MCF 10A (cell line): ENCODE measurements at regions of chr3 and their contacts with region 1.

Region 1: GRCh38 chr3:51445544-51446280 is 54.1 kb downstream of the DCAF1 start:
- DNase-seq: no peak
- H3K4me3 Mint-ChIP-seq: no peak overlapping the region
- H3K27ac Mint-ChIP-seq: no peak overlapping the region
- H3K4me1 Mint-ChIP-seq: peaks cover 6% of the 10 kb centered on the region
- H3K27me3 Mint-ChIP-seq: no peaks in the 10 kb centered on the region
- CTCF ChIP-seq: no peak

Region 2: DNA sequence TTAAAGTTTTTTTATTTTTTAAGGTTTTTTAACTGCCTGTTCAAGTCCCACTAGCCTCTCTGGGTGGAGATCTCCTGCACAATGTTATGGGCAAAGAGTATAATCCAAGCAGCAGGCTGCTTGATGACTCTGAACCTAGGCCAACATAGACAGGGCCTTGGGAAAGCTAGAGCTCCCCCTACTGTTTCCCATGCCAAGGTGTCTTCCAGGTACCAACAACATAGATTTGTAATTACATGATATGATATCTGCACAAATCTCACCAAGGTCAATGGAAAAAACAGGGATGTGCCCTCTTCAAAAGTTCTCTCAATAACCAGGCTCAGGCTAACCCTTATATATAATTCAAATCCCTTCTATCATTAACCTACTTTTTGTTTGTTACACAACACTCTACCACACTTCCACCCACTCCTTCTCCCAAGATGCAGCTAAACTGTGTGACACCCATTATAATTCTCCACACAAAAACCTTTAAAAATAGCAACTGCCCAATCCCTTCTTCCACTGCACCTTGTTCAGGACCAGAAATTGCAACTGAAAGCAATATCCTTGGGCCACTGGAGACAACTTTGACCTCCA is 10.9 kb before region 1 on chr3:
- CTCF ChIA-PET with region 1: interaction called, 15 read pairs
- POLR2A ChIA-PET with region 1: no interaction called
- intact Hi-C with region 1: no loop called
- DNase-seq: peak; percentile 70
- H3K4me3 Mint-ChIP-seq: no peak overlapping the region
- H3K27ac Mint-ChIP-seq: peak overlapping the region; percentile 83
- H3K4me1 Mint-ChIP-seq: peaks cover 9% of the 10 kb centered on the region
- H3K27me3 Mint-ChIP-seq: no peaks in the 10 kb centered on the region
- CTCF ChIP-seq: peak; percentile 64

Region 3: GRCh38 chr3:52099001-52099401 is 653.3 kb after region 1 on chr3:
- CTCF ChIA-PET with region 1: no interaction called
- POLR2A ChIA-PET with region 1: no interaction called
- intact Hi-C with region 1: no loop called
- DNase-seq: no peak
- H3K4me3 Mint-ChIP-seq: no peak overlapping the region
- H3K27ac Mint-ChIP-seq: no peak overlapping the region
- H3K4me1 Mint-ChIP-seq: no peaks in the 10 kb centered on the region
- H3K27me3 Mint-ChIP-seq: no peaks in the 10 kb centered on the region
- CTCF ChIP-seq: no peak